SK-N-SH (cell line): ENCODE measurements at regions of chr14 and their contacts with region 1.

Region 1: GRCh38 chr14:94548999-94549985 is 11.9 kb upstream of the SERPINA4 start:
- DNase-seq: peak; percentile 66
- H3K4me3 ChIP-seq: no peak overlapping the region; a peak in 1 of 4 replicates
- H3K27ac ChIP-seq: no peak overlapping the region
- H3K4me1 ChIP-seq: no peaks in the 10 kb centered on the region
- H3K27me3 ChIP-seq: no peaks in the 10 kb centered on the region
- CTCF ChIP-seq: peak; percentile 93
- EP300 ChIP-seq: no peak
- RAD21 ChIP-seq: peak; percentile 57

Region 2: DNA sequence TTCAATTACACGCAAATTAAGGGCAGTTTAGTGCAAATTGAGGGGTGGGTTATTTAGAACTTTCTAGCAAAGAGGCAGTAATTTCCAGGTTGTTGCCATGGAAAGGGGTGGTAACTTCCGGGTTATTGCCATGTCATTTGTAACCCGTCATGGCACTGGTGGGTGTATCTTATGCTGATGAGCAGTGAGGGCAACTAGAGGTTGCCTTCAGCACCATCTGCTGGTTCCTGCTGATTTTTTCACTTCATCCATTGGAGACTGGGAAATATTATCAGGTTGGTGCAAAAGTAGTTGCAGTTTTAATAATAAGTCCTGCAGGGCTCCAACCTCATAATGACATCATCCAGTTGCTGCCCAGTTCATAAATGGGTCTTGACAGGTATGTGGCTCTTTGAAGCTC is 12.5 kb before region 1 on chr14:
- CTCF ChIA-PET with region 1: interaction called, 28 read pairs
- POLR2A ChIA-PET with region 1: no interaction called
- DNase-seq: no peak
- H3K4me3 ChIP-seq: no peak overlapping the region
- H3K27ac ChIP-seq: no peak overlapping the region
- H3K4me1 ChIP-seq: no peaks in the 10 kb centered on the region
- H3K27me3 ChIP-seq: peaks cover 7% of the 10 kb centered on the region; the same call in 1 of the 2 replicates
- CTCF ChIP-seq: peak; percentile 34; the same call in 1 of the 2 replicates
- EP300 ChIP-seq: no peak
- RAD21 ChIP-seq: no peak

Region 3: DNA sequence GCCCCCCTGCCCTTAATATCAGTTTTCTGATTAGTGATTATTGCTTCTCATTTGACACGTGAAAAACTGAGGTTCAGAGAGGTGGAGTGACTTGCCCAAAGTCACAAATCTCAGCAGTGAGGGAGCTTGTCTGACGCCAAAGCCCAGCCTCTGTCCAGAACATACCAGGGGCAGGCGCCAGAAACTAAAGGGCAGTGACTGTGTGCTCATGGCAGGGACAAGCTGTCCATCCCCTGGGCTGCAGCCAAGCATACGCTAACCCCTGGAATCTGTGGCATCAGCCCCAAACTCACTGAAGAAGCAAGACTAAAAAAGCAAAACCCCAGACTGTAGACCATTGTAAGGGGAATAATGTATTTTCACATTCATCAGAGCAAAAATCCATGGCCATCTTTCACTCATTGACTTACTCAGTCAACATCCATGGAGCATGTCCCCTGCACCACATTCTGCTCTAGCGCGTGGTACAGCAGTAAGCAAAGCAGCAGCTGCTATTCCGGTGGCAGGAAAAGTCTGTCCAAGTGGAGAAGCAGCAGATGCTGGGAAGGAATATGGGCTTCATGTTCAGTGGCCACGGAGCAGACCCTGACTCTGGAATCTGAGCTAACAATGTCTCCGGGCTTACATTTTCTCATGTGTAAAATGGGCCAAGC is 10.5 kb after region 1 on chr14:
- CTCF ChIA-PET with region 1: interaction called, 49 read pairs
- POLR2A ChIA-PET with region 1: no interaction called
- DNase-seq: no peak
- H3K4me3 ChIP-seq: no peak overlapping the region
- H3K27ac ChIP-seq: no peak overlapping the region
- H3K4me1 ChIP-seq: no peaks in the 10 kb centered on the region
- H3K27me3 ChIP-seq: no peaks in the 10 kb centered on the region; the same call in 1 of the 2 replicates
- CTCF ChIP-seq: no peak
- EP300 ChIP-seq: no peak
- RAD21 ChIP-seq: no peak

Region 4: GRCh38 chr14:94572637-94573303 is 23.5 kb after region 1 on chr14:
- CTCF ChIA-PET with region 1: interaction called, 12 read pairs
- POLR2A ChIA-PET with region 1: no interaction called
- DNase-seq: no peak
- H3K4me3 ChIP-seq: no peak overlapping the region
- H3K27ac ChIP-seq: no peak overlapping the region
- H3K4me1 ChIP-seq: no peaks in the 10 kb centered on the region
- H3K27me3 ChIP-seq: peaks cover 5% of the 10 kb centered on the region; the same call in 1 of the 2 replicates
- CTCF ChIP-seq: no peak
- EP300 ChIP-seq: no peak
- RAD21 ChIP-seq: no peak

Region 5: GRCh38 chr14:94646481-94646880 is 97.2 kb after region 1 on chr14:
- CTCF ChIA-PET with region 1: no interaction called
- POLR2A ChIA-PET with region 1: no interaction called
- DNase-seq: no peak
- H3K4me3 ChIP-seq: no peak overlapping the region
- H3K27ac ChIP-seq: no peak overlapping the region
- H3K4me1 ChIP-seq: no peaks in the 10 kb centered on the region; a peak in 1 of 4 replicates
- H3K27me3 ChIP-seq: no peaks in the 10 kb centered on the region; the same call in 1 of the 2 replicates
- CTCF ChIP-seq: no peak
- EP300 ChIP-seq: no peak
- RAD21 ChIP-seq: no peak